HepG2 (cell line): ENCODE measurements at regions of chr9 and their contacts with region 1.

Region 1: DNA sequence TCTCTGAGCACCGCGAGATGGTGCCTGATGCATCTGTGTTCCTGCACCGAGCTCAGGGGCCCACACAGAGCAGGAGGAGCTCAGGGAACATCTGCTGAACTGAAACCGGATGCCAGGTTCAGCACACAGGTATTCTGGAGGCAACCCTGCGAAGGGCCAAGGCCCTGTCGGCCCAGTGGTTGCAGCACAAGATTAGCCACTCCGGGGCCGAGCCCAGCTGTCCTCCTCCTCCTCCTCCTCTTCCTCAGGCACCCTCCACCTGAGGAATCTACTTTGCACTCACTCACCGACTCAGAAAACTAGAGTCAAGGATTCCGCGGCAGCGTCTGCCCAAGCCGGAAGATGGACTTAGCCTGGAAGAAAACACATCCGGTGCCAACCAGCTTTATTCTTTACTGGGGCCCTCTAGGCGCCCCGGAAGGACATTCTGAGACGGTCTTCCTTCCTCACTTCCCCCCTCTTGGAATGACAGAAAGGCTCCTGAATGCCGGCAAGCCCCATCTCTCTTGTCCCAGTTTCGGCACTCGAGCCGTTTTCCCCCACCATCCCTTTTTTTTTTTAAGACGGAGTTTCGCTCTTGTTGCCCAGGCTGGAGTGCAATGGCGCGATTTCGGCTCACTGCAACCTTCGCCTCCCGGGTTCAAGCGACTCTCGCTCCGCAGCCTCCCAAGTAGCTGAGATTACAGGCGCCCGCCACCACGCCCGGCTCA is at the start of gene ZBTB6:
- DNase-seq: peak; percentile 83
- ATAC-seq: peak; percentile 99
- H3K4me3 ChIP-seq: peak within 1 kb of the TSS; percentile 79 to 90 (median 81)
- H3K27ac ChIP-seq: peak within 1 kb of the TSS; percentile 93
- H3K4me1 ChIP-seq: peaks cover 11% of the 10 kb centered on the region
- H3K27me3 ChIP-seq: no peaks in the 10 kb centered on the region
- CTCF ChIP-seq: peak; percentile 56
- EP300 ChIP-seq: no peak; a peak in 1 of 4 replicates
- POLR2A ChIP-seq: peak; percentile 61 to 87; a peak in 3 of 4 replicates
- RAD21 ChIP-seq: peak; percentile 36; the same call in 1 of the 2 replicates
- total RNA-seq, gene ZBTB6: 7.1 and 12.1 TPM in 2 replicates

Region 2: DNA sequence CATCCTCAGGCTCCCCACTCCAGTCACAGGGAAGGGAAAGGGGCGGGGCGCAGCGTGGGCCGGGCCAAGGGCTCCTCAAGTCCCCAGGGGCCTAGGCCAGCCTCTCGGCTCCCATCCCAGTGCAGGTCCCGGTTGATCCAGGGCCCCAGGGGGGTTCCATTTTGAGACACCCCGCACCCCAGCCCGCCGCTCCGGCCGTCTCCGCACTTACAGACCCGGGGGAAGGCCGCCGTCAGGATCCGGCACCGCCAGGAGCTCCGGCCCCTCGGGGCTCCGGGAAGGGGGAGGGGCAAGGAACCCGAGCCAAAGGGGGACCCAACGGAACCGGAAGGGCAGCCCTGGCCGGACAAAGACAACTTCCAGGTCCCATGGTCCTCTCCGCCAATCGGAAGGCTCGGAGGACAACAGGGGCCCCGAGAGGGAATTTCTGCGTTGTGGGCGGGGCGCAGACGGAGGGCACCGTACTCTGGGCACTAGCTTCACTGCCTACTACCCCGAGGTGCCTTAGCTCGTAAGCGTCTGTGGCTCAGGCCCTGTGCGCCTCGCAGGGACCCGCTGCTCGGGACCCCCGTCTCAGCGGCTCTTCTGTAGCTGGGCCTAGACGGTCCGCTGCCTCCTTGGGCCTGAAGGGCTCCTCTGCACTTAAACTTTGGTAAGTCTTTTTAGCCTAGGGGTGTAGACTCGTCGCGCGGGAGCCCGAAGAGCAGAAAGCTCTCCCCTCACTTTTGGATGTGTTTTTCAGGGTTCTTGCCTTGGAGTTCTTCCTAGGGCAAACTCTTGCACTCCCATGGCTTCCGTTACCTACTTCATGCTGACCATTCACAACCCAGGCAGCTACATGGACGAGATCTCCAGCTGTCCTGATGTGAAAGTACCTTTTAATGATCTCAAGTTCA is 18.4 kb after region 1 on chr9 and contains the start of gene ZBTB26:
- CTCF ChIA-PET with region 1: no interaction called
- POLR2A ChIA-PET with region 1: interaction called, 64 read pairs
- in situ Hi-C with region 1: no loop called
- intact Hi-C with region 1: loop called (anchors 2 kb)
- DNase-seq: peak; percentile 94
- ATAC-seq: peak; percentile 98
- H3K4me3 ChIP-seq: peak within 1 kb of the TSS; percentile 72 to 99 (median 85)
- H3K27ac ChIP-seq: peak within 1 kb of the TSS; percentile 87
- H3K4me1 ChIP-seq: peaks cover 43% of the 10 kb centered on the region
- H3K27me3 ChIP-seq: no peaks in the 10 kb centered on the region; a peak in 1 of 5 replicates
- CTCF ChIP-seq: no peak
- EP300 ChIP-seq: no peak
- POLR2A ChIP-seq: peak; percentile 95
- RAD21 ChIP-seq: no peak; the same call in 1 of the 2 replicates
- total RNA-seq, gene ZBTB26: 4.5 and 5.6 TPM in 2 replicates

Region 3: GRCh38 chr9:122991370-122991830 is 78.3 kb after region 1 on chr9:
- CTCF ChIA-PET with region 1: no interaction called
- POLR2A ChIA-PET with region 1: interaction called, 6 read pairs
- in situ Hi-C with region 1: no loop called
- intact Hi-C with region 1: loop called (anchors 5 kb)
- DNase-seq: peak; percentile 25
- ATAC-seq: peak; percentile 43; the same call in 1 of the 3 replicates
- H3K4me3 ChIP-seq: no peak overlapping the region
- H3K27ac ChIP-seq: no peak overlapping the region
- H3K4me1 ChIP-seq: no peaks in the 10 kb centered on the region
- H3K27me3 ChIP-seq: no peaks in the 10 kb centered on the region
- CTCF ChIP-seq: peak; percentile 59
- EP300 ChIP-seq: no peak
- POLR2A ChIP-seq: no peak
- RAD21 ChIP-seq: no peak